Activated CD4-positive, alpha-beta T cell treated with anti-CD3 and anti-CD28 coated beads for 36 hours (primary cell): ENCODE measurements at regions of chr5 and their contacts with region 1.

Region 1: DNA sequence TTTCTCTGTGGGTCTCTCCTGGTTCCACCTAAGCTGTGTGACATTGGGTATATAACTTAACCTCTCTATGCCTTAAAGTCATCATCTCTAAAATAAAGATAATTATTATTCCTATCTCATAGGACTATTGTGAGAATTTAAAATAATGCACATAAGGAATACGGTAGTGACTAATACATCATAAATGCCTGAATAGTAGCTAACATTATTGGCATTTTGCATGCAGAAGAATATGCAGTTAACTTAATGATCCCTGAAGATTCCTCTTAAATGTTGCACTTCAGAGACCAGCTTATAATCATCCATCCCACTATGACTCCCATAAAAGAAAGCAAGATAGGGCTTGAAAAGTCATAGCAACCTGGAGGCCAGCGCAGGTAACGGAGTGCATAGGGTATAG is 32.4 kb downstream of the OXCT1 start:
- DNase-seq: no peak
- ATAC-seq: no peak
- H3K4me3 Mint-ChIP-seq: no peak overlapping the region
- H3K27ac Mint-ChIP-seq: no peak overlapping the region
- H3K4me1 Mint-ChIP-seq: peaks cover 35% of the 10 kb centered on the region
- H3K27me3 Mint-ChIP-seq: no peaks in the 10 kb centered on the region

Region 2: GRCh38 chr5:41268898-41269297 is 568.9 kb before region 1 on chr5:
- CTCF ChIA-PET with region 1: no interaction called
- POLR2A ChIA-PET with region 1: no interaction called
- intact Hi-C with region 1: loop called in 1 of 2 experiments (anchors 2 kb)
- DNase-seq: no peak
- ATAC-seq: no peak
- H3K4me3 Mint-ChIP-seq: no peak overlapping the region
- H3K27ac Mint-ChIP-seq: no peak overlapping the region
- H3K4me1 Mint-ChIP-seq: no peaks in the 10 kb centered on the region
- H3K27me3 Mint-ChIP-seq: no peaks in the 10 kb centered on the region

Region 3: GRCh38 chr5:42228279-42228678 is 390.5 kb after region 1 on chr5:
- CTCF ChIA-PET with region 1: no interaction called
- POLR2A ChIA-PET with region 1: no interaction called
- intact Hi-C with region 1: no loop called
- DNase-seq: no peak
- ATAC-seq: no peak
- H3K4me3 Mint-ChIP-seq: no peak overlapping the region
- H3K27ac Mint-ChIP-seq: no peak overlapping the region
- H3K4me1 Mint-ChIP-seq: no peaks in the 10 kb centered on the region
- H3K27me3 Mint-ChIP-seq: no peaks in the 10 kb centered on the region